Naive thymus-derived CD8-positive, alpha-beta T cell (primary cell): ENCODE measurements at regions of chr3 and their contacts with region 1.

Region 1: DNA sequence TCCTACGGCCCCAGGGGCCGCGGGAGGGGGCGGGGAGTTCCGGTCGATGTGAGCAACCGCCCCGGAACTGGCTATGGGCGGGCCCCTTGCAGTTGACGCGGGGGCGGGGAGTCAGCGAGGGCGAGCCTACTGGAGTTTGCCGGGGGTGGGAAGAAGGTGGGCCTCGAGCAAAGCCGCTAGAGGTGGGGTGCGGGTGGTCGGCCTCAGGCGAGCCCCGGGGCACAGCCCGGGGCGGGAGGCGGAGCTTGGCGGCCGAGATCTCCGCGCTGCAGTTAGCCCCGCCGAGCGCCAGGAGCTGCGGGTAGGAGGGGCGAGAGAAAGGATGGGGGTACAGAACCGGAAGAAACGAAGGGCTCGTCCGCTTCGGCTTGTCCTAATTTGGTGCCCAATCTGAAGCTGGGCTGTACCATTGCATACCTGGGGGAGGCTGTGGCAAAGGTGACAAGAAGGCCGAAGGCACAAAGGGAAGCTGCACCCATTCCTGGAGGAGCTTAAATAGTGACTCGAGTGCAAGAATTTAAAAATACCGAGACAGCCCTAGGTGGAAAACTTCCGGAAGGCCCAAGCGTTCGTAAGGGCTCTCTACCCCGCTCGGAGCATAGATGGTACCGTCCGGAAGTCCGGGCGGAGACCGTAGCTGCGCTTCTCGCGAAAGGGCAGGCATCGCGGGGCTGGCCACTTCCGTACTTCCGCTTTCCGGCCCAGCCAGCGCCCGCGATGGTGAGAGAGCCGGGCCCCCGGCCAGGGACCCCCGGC is at the starts of genes ARPC4 and TADA3:
- DNase-seq: peak; percentile 85 to 98 (median 89)
- ATAC-seq: peak; percentile 86 to 87
- H3K4me3 Mint-ChIP-seq: peak within 1 kb of the TSS; percentile 91 to 100 (median 96)
- H3K27ac Mint-ChIP-seq: peak within 1 kb of the TSS; percentile 95 to 100 (median 99)
- H3K4me1 Mint-ChIP-seq: peaks cover 36 to 78% (median 73%) of the 10 kb centered on the region in 4 donors
- H3K27me3 Mint-ChIP-seq: no peaks in the 10 kb centered on the region
- polyA plus RNA-seq, gene ARPC4: 201 to 229 (median 225) TPM
- polyA plus RNA-seq, gene TADA3: 38.2 to 51.2 (median 44.1) TPM

Region 2: DNA sequence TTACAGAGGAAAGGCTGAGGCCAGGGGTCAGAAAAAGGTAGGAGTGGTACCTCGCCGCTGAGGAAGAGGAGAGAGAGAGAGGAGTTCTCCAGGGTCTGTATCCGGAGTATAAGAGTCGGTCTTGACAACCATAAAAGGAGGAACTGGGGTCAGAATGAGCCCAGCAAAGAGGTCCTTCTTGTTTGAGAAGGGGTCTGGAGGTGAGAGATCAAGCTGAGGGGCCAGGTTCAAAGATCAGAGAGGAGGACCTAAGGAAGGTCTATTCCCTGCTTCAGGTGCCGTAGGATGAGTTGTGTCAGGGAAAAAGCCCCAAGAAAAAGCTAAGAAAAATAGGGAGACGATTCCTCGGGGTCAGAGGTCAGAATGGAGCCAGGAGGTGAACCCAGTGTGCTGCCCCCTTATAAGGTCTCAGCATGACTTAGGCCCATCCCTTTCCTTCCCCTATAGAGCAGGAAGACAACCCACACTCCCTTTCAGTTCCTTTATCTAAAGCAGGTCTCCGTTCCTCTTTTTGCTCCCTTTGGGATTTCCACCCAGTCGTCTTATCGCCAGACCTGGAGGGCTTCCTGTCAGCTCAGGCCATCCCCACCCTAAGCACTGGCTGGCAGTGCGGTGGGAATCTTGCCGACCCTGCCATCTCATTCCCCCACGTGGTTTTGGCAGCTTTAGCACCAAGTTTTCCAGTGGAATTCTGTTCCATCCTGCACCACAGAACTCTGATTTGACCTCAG is 142.6 kb before region 1 on chr3:
- POLR2A ChIA-PET with region 1: interaction called, 26 read pairs
- DNase-seq: peak in 1 of 10 donors; percentile 7
- ATAC-seq: no peak
- H3K4me3 Mint-ChIP-seq: peak overlapping the region; percentile 80 to 99 (median 94)
- H3K27ac Mint-ChIP-seq: peak overlapping the region; percentile 88 to 98 (median 94)
- H3K4me1 Mint-ChIP-seq: peaks cover 18 to 51% (median 42%) of the 10 kb centered on the region in 4 donors
- H3K27me3 Mint-ChIP-seq: no peaks in the 10 kb centered on the region

Region 3: GRCh38 chr3:9731206-9732079 is 61.1 kb before region 1 on chr3 and contains the start of gene BRPF1:
- POLR2A ChIA-PET with region 1: interaction called, 34 read pairs
- DNase-seq: peak; percentile 95 to 99 (median 99)
- ATAC-seq: peak; percentile 93
- H3K4me3 Mint-ChIP-seq: peak within 1 kb of the TSS; percentile 84 to 99 (median 94)
- H3K27ac Mint-ChIP-seq: peak within 1 kb of the TSS; percentile 92 to 99 (median 95)
- H3K4me1 Mint-ChIP-seq: peaks cover 37 to 70% (median 63%) of the 10 kb centered on the region in 4 donors
- H3K27me3 Mint-ChIP-seq: no peaks in the 10 kb centered on the region
- polyA plus RNA-seq, gene BRPF1: 8.8 to 24.9 (median 10.8) TPM

Region 4: GRCh38 chr3:9749645-9750555 is 42.7 kb before region 1 on chr3 and contains the start of gene OGG1:
- POLR2A ChIA-PET with region 1: interaction called, 47 read pairs
- DNase-seq: peak; percentile 80 to 98 (median 94)
- ATAC-seq: peak; percentile 95 to 96
- H3K4me3 Mint-ChIP-seq: peak within 1 kb of the TSS; percentile 91 to 99 (median 96)
- H3K27ac Mint-ChIP-seq: peak within 1 kb of the TSS; percentile 90 to 98 (median 93)
- H3K4me1 Mint-ChIP-seq: peaks cover 22 to 50% (median 47%) of the 10 kb centered on the region in 4 donors
- H3K27me3 Mint-ChIP-seq: no peaks in the 10 kb centered on the region
- polyA plus RNA-seq, gene OGG1: 15.3 to 20.7 (median 18.0) TPM

Region 5: DNA sequence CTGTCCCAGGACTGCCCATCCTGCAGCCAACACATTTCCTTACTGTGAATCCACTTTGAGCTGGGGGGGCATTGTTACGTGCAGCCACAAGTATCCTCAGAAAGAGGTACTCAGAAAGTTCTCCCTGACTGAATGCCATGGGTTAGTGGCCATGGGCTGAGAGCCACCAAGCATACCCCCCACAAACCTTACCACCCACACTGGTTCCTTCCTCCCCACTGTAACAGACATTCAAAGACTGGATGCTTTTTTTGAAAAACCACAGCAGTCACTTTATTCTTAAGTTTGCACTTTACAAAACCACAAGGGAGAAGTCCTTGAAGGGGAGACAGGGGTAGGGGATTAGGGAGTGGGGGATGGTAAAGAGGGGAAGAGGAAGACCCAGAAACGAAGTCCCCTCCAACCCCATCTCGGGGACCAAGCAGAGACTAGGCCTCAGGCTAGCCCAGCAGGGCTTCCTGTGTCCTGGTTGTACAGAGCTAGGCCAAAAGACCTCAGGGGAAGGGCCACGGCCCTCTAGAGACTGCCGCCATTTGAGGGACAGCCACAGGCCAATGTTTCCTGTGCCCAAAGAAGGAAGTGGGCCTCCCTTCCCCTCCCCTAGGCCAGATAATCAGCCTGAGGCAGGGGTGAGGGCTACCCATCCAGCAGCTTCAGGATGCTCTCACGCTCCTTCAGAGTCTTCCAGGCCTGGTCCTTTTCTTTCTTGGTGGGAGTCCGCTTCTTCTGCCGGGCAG is 12.7 kb before region 1 on chr3:
- POLR2A ChIA-PET with region 1: interaction called, 18 read pairs
- DNase-seq: peak in 5 of 10 donors; percentile 25 to 60 (median 56)
- ATAC-seq: peak; percentile 86 to 91
- H3K4me3 Mint-ChIP-seq: peak overlapping the region; percentile 42 to 84 (median 71)
- H3K27ac Mint-ChIP-seq: peak overlapping the region; percentile 36 to 90 (median 74)
- H3K4me1 Mint-ChIP-seq: peaks cover 35 to 65% (median 63%) of the 10 kb centered on the region in 4 donors
- H3K27me3 Mint-ChIP-seq: no peaks in the 10 kb centered on the region

Region 6: DNA sequence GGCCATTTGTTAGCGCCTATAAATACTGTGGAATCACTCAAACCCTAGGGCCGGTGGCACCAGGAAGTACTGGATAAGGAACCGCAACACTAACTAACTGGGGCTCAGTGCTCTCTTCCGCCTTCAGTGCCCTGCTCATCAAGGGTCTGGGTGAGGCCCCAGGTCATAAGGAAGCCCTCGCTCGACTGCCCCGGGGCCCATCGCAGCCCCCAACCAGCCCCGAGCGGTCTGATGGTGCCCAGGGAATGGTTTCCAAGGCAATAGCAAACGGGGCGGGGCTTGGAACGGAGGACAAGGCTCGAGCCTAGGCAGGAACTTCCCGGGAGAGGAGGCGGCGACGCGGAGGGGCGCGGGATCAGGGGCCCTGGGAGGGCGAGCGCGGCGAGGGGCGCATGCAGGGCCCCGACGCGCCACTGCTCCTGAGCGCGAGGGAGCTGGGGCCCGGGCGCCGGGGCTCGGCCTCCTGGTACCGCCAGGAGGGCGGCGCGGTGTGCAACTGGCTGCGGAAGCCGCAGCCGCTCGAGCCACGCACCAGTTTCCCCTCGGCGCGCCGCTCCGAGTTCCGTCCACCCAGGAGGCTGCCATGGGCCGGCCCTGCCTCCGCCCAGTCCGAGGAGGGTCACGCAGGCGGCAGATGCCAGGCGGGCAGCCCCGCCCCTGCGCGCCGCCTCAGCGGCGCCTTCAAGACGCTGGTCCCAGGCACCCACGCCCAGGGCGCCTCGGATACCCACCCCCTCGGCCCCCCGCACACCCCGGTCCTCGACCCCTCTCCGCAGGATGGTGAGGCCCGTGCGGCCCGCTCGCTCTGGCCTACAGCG is 17.2 kb after region 1 on chr3 and contains the start of gene TTLL3:
- POLR2A ChIA-PET with region 1: interaction called, 23 read pairs
- DNase-seq: peak; percentile 8 to 69 (median 39)
- ATAC-seq: peak; percentile 68 to 78
- H3K4me3 Mint-ChIP-seq: peak within 1 kb of the TSS; percentile 87 to 93 (median 92)
- H3K27ac Mint-ChIP-seq: peak within 1 kb of the TSS; percentile 92 to 99 (median 96)
- H3K4me1 Mint-ChIP-seq: peaks cover 30 to 41% (median 37%) of the 10 kb centered on the region in 4 donors
- H3K27me3 Mint-ChIP-seq: no peaks in the 10 kb centered on the region
- polyA plus RNA-seq, gene TTLL3: 1.3 to 2.5 (median 2.2) TPM